ENCODE measurements at regions of chr5 and their contacts with region 1.

Region 1: GRCh38 chr5:112551419-112552032 is 132.4 kb upstream of the EPB41L4A start:
- DNase-seq: peak; percentile 69
- H3K4me3 Mint-ChIP-seq: no peak overlapping the region
- H3K27ac Mint-ChIP-seq: no peak overlapping the region
- H3K4me1 Mint-ChIP-seq: peaks cover 8% of the 10 kb centered on the region
- H3K27me3 Mint-ChIP-seq: no peaks in the 10 kb centered on the region
- CTCF ChIP-seq: peak; percentile 68

Region 2: GRCh38 chr5:112349371-112349770 is 202.2 kb before region 1 on chr5:
- CTCF ChIA-PET with region 1: no interaction called
- POLR2A ChIA-PET with region 1: no interaction called
- intact Hi-C with region 1: no loop called
- DNase-seq: no peak
- H3K4me3 Mint-ChIP-seq: no peak overlapping the region
- H3K27ac Mint-ChIP-seq: no peak overlapping the region
- H3K4me1 Mint-ChIP-seq: no peaks in the 10 kb centered on the region
- H3K27me3 Mint-ChIP-seq: no peaks in the 10 kb centered on the region
- CTCF ChIP-seq: no peak

Region 3: GRCh38 chr5:112737463-112738190 is 186.1 kb after region 1 on chr5 and contains the start of gene APC:
- CTCF ChIA-PET with region 1: interaction called, 38 read pairs
- POLR2A ChIA-PET with region 1: no interaction called
- intact Hi-C with region 1: no loop called
- DNase-seq: peak; percentile 91
- H3K4me3 Mint-ChIP-seq: peak within 1 kb of the TSS; percentile 92
- H3K27ac Mint-ChIP-seq: peak within 1 kb of the TSS; percentile 92
- H3K4me1 Mint-ChIP-seq: peaks cover 6% of the 10 kb centered on the region
- H3K27me3 Mint-ChIP-seq: no peaks in the 10 kb centered on the region
- CTCF ChIP-seq: no peak
- total RNA-seq, gene APC: 24.9 and 31.8 TPM in 2 replicates

Region 4: DNA sequence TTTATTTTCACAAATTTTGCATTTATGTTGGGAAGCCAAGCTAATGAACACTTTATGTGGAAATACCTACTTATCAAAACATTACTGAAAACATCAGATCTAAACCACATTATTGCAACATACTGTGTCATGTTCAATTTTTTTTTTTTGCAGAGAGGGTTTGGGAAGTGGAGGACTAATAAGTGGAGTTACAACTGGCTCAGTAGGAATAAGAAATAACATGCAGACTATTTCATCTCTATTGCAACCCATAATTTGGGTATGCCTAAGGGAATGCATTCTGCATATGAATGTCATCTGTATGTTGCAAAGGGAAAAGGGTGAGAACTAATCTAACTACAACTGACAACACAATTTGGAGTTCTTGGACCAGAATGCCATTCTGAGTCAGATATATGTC is 228.0 kb after region 1 on chr5:
- CTCF ChIA-PET with region 1: interaction called, 11 read pairs
- POLR2A ChIA-PET with region 1: interaction called, 4 read pairs
- intact Hi-C with region 1: no loop called
- DNase-seq: peak; percentile 61
- H3K4me3 Mint-ChIP-seq: no peak overlapping the region
- H3K27ac Mint-ChIP-seq: no peak overlapping the region
- H3K4me1 Mint-ChIP-seq: peaks cover 7% of the 10 kb centered on the region
- H3K27me3 Mint-ChIP-seq: no peaks in the 10 kb centered on the region
- CTCF ChIP-seq: no peak

Region 5: GRCh38 chr5:112795944-112796678 is 244.6 kb after region 1 on chr5:
- CTCF ChIA-PET with region 1: no interaction called
- POLR2A ChIA-PET with region 1: no interaction called
- intact Hi-C with region 1: no loop called
- DNase-seq: no peak
- H3K4me3 Mint-ChIP-seq: no peak overlapping the region
- H3K27ac Mint-ChIP-seq: no peak overlapping the region
- H3K4me1 Mint-ChIP-seq: no peaks in the 10 kb centered on the region
- H3K27me3 Mint-ChIP-seq: no peaks in the 10 kb centered on the region
- CTCF ChIP-seq: no peak

Region 6: GRCh38 chr5:112968411-112969106 is 417.0 kb after region 1 on chr5:
- CTCF ChIA-PET with region 1: interaction called, 5 read pairs
- POLR2A ChIA-PET with region 1: no interaction called
- intact Hi-C with region 1: loop called (anchors 1 kb)
- DNase-seq: no peak
- H3K4me3 Mint-ChIP-seq: no peak overlapping the region
- H3K27ac Mint-ChIP-seq: no peak overlapping the region
- H3K4me1 Mint-ChIP-seq: peaks cover 5% of the 10 kb centered on the region
- H3K27me3 Mint-ChIP-seq: no peaks in the 10 kb centered on the region
- CTCF ChIP-seq: no peak

Measured in MCF 10A (cell line).